Mammary epithelial cell (primary cell): ENCODE measurements at regions of chr9 and their contacts with region 1.

Region 1: DNA sequence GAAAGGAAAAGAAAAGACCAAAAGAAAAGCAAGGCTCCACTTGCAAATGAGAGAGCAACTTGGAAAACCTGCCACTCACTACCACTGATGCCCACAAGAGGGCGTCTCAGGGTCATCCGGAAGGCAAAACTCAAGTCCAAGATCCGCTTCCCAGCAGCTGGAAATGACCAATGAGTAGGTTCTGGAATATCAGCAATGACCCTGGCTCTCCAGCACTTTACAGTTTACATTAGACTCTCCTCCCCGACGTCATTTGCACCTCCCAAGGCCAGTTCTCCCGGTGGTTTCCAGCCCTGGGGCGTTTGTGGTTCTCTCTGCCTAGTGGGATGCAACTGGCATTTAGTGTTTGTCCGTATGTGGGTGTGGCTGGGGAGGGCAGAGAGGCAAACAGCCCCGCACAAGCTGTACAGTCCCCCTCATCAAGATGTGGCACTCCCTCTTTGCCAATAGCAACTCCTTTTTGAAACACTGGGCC is 193.8 kb upstream of the ZNF618 start:
- DNase-seq: peak; percentile 85
- H3K4me3 ChIP-seq: no peak overlapping the region
- H3K27ac ChIP-seq: no peak overlapping the region
- H3K4me1 ChIP-seq: peaks cover 16% of the 10 kb centered on the region
- H3K27me3 ChIP-seq: no peaks in the 10 kb centered on the region
- CTCF ChIP-seq: peak; percentile 93 to 95

Region 2: GRCh38 chr9:113523421-113524236 is 158.7 kb before region 1 on chr9:
- CTCF ChIA-PET with region 1: no interaction called
- dilution Hi-C with region 1: no loop called
- in situ Hi-C with region 1: no loop called
- intact Hi-C with region 1: no loop called
- DNase-seq: no peak
- H3K4me3 ChIP-seq: no peak overlapping the region
- H3K27ac ChIP-seq: no peak overlapping the region
- H3K4me1 ChIP-seq: peaks cover 9% of the 10 kb centered on the region
- H3K27me3 ChIP-seq: no peaks in the 10 kb centered on the region
- CTCF ChIP-seq: no peak

Region 3: DNA sequence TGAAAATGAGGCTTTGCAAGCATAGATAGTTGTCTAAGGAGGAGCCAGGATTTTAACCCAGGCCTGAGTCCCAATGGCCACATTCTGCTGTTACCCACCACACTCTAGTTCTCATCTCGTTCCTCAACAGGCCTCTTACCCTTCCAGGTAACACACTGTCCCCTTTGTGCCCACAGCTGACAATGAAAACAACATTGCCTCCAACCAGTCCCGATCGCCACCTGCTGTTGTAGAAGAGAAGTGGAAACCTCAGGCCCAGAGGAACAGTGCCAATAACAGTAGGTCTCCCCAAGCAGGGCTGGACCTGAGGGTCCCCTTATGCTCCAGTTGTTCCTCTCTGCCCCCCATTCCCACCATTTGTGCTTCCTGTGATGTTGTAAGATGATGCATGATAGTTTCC is 365.4 kb after region 1 on chr9:
- CTCF ChIA-PET with region 1: no interaction called
- dilution Hi-C with region 1: no loop called
- in situ Hi-C with region 1: no loop called
- intact Hi-C with region 1: loop called (anchors 1 kb)
- DNase-seq: no peak
- H3K4me3 ChIP-seq: no peak overlapping the region
- H3K27ac ChIP-seq: no peak overlapping the region
- H3K4me1 ChIP-seq: peaks cover 9% of the 10 kb centered on the region
- H3K27me3 ChIP-seq: no peaks in the 10 kb centered on the region
- CTCF ChIP-seq: peak; percentile 25 to 46